Endothelial cell of umbilical vein (primary cell): ENCODE measurements at regions of chr2 and their contacts with region 1.

Region 1: DNA sequence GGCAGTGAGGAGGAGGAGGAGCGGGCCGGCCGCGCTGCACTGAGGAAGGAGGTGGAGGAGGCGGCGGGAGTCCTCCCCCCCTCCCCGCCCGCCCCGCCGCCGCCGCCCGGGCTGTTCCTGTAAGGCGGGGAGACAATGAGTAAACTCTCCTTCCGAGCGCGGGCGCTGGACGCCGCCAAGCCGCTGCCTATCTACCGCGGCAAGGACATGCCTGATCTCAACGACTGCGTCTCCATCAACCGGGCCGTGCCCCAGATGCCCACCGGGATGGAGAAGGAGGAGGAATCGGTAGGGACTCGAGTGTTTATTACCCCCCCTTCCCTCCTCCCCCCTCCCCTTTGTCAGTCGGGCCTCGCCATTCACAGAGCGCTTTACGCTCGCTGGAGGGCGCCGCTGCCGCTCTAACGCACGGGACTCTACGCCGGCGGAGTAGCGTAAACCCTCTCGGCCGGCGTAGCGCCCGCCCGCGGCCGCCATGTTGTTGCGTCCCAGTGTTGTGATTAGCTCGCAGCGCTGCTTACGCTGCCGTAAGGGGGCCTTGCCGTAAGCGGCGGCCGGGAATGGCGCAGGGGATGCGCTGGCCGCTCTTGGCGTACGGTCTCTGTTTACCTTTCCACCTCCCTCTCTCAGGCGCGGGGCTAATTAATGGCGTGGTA is 460 bp downstream of the EPC2 start:
- DNase-seq: peak; percentile 95
- H3K4me3 ChIP-seq: peak overlapping the region; percentile 83 to 85 (median 83)
- H3K27ac ChIP-seq: peak overlapping the region; percentile 84
- H3K4me1 ChIP-seq: peaks cover 25% of the 10 kb centered on the region
- H3K27me3 ChIP-seq: no peaks in the 10 kb centered on the region
- CTCF ChIP-seq: peak; percentile 14 to 47
- POLR2A ChIP-seq: peak; percentile 87

Region 2: GRCh38 chr2:147937744-147938349 is 707.2 kb before region 1 on chr2:
- CTCF ChIA-PET with region 1: no interaction called
- POLR2A ChIA-PET with region 1: no interaction called
- dilution Hi-C with region 1: no loop called
- intact Hi-C with region 1: loop called (anchors 10 kb)
- DNase-seq: peak; percentile 36
- H3K4me3 ChIP-seq: no peak overlapping the region
- H3K27ac ChIP-seq: no peak overlapping the region
- H3K4me1 ChIP-seq: no peaks in the 10 kb centered on the region
- H3K27me3 ChIP-seq: no peaks in the 10 kb centered on the region
- CTCF ChIP-seq: peak; percentile 51 to 69
- POLR2A ChIP-seq: no peak

Region 3: GRCh38 chr2:148020111-148021058 is 624.6 kb before region 1 on chr2 and contains the start of gene ORC4:
- CTCF ChIA-PET with region 1: interaction called, 7 read pairs
- POLR2A ChIA-PET with region 1: interaction called, 5 read pairs
- dilution Hi-C with region 1: no loop called
- intact Hi-C with region 1: loop called (anchors 2 kb)
- DNase-seq: peak; percentile 100
- H3K4me3 ChIP-seq: peak within 1 kb of the TSS; percentile 77 to 88 (median 88)
- H3K27ac ChIP-seq: peak within 1 kb of the TSS; percentile 74
- H3K4me1 ChIP-seq: peaks cover 25% of the 10 kb centered on the region
- H3K27me3 ChIP-seq: no peaks in the 10 kb centered on the region
- CTCF ChIP-seq: peak; percentile 28 to 65
- POLR2A ChIP-seq: no peak
- total RNA-seq, gene ORC4: 24.5 and 27.0 TPM in 2 replicates

Region 4: DNA sequence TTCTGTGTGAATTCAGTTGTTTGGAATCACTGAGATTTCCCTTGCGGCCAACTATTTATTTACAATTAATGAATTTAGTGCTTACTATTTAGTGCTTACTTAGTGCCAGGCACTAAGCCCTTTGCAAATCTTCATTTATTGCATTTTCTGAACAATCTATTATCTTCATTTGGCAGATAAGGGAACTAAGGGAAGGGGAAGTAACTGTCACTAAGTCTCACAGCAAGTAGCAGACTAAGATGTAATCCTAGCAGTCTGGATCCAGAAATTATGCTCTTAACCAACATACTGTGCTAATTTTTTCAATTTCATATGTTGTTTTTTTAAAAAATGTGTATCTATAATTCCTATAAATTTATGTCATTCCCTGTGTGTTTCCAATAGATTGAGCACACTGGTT is 214.9 kb before region 1 on chr2:
- CTCF ChIA-PET with region 1: no interaction called
- POLR2A ChIA-PET with region 1: no interaction called
- dilution Hi-C with region 1: no loop called
- intact Hi-C with region 1: no loop called
- DNase-seq: no peak
- H3K4me3 ChIP-seq: no peak overlapping the region
- H3K27ac ChIP-seq: no peak overlapping the region
- H3K4me1 ChIP-seq: no peaks in the 10 kb centered on the region
- H3K27me3 ChIP-seq: no peaks in the 10 kb centered on the region
- CTCF ChIP-seq: no peak
- POLR2A ChIP-seq: no peak

Region 5: DNA sequence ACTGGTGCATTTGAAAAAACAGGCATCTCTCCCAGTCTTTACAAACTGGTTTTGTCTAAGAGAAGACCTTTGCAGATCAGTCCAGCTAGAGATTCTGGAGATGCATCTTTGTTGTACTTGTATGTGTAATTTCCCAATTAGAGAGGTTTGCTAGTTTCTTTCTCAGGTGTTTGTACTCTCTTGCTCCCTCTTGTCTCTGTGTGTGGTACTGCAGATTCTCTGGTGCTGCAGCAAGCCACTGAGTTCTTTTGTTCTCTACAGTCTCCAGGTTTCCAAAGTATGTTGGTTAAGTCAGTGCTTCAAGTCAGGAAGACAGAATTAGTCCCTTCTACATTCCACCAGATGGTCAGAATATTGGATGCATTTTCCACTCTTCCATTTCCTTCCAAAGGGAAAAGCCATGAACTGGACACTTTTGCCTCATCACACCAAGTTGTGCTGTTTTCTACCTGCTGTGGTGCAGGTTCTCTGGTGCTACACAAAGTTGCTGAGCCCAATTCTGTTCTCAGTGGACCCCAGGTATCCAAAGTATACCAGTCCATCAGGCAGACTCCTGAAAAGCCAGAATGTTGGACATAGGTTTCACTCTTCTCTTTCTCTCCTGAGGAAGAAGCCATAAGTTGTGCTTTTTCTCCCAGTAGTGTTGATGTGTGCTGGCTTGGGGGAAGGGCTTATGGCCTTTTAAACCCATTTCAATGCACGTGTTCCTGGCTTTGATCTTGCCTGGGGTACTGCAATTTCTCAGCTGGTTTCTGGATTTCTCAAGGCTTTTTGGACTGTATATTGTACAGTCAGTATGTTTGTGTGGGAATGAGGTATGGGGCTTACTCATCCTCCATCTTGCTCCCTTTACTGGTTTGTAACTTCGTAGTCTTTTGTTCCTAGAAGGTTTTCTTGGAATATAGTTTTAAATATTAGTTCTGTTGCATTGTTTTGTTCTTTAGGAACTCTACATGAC is 29.3 kb after region 1 on chr2:
- CTCF ChIA-PET with region 1: interaction called, 3 read pairs
- POLR2A ChIA-PET with region 1: interaction called, 5 read pairs
- dilution Hi-C with region 1: no loop called
- intact Hi-C with region 1: loop called (anchors 1 kb)
- DNase-seq: peak; percentile 29
- H3K4me3 ChIP-seq: no peak overlapping the region
- H3K27ac ChIP-seq: no peak overlapping the region
- H3K4me1 ChIP-seq: peaks cover 11% of the 10 kb centered on the region
- H3K27me3 ChIP-seq: no peaks in the 10 kb centered on the region
- CTCF ChIP-seq: peak; percentile 41 to 59
- POLR2A ChIP-seq: no peak

Region 6: DNA sequence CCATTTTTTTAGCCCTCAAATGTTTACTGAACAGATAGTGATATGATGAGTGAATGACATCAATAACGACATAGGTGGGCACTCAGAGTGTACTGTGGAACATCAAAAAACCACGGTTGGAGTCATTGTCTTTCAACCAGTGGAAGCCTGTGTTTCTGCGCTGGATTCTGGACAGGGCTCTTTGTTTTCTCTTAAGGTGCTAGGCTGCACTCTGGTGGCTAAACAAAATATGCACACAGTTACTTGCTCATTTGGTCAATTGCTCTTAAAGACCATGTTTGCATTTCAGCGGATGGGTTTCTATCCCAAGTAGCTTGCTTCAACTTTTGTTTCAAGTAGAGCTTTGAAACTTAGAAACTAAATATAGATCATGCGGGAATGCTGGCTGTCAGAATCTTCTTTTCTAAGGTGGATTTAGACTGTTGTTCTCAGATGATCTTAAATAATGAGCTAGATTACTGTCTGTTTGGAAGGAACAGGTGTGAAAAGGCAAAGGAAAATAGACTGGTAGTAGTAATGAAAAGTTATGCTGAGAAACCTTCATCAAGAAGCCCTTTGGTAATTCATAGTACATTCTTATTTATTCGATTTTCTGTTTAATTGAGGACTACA is 345.0 kb after region 1 on chr2:
- CTCF ChIA-PET with region 1: interaction called, 7 read pairs
- POLR2A ChIA-PET with region 1: no interaction called
- dilution Hi-C with region 1: no loop called
- intact Hi-C with region 1: loop called (anchors 10 kb)
- DNase-seq: peak; percentile 75
- H3K4me3 ChIP-seq: no peak overlapping the region
- H3K27ac ChIP-seq: no peak overlapping the region
- H3K4me1 ChIP-seq: no peaks in the 10 kb centered on the region
- H3K27me3 ChIP-seq: no peaks in the 10 kb centered on the region
- CTCF ChIP-seq: peak; percentile 55 to 59
- POLR2A ChIP-seq: no peak

Region 7: GRCh38 chr2:149561309-149561926 is 916.4 kb after region 1 on chr2:
- CTCF ChIA-PET with region 1: no interaction called
- POLR2A ChIA-PET with region 1: no interaction called
- dilution Hi-C with region 1: no loop called
- intact Hi-C with region 1: loop called (anchors 10 kb)
- DNase-seq: peak; percentile 57
- H3K4me3 ChIP-seq: no peak overlapping the region
- H3K27ac ChIP-seq: no peak overlapping the region
- H3K4me1 ChIP-seq: peaks cover 7% of the 10 kb centered on the region
- H3K27me3 ChIP-seq: no peaks in the 10 kb centered on the region
- CTCF ChIP-seq: peak; percentile 40 to 55
- POLR2A ChIP-seq: no peak